Ovary (tissue), 10 donors: ENCODE measurements at regions of chr7 and their contacts with region 1.

Region 1: DNA sequence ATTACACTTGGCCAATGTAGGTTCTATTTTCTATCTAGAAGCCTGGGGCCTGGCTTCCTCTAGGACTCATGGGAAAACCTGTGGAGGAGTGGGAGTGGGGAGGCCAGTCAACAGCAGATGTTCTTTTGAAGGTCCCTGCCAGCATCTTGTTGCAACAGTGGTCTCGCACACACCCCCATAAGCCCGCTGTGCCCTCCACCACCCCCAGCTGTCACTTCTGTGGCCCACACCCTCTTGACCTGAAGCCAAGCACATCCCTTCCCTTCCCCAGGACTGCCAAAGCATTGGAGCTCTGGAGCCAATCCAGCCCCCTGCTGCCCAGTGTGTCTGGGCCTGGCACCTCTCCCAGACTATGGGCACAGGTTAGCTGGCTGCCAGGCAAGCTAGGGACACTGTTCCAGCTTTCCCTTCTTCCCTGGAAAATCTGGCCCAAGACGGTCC is 1.9 kb upstream of the STX1A start:
- DNase-seq: no peak
- H3K4me3 ChIP-seq: no peak overlapping the region
- H3K27ac ChIP-seq: no peak overlapping the region
- H3K4me1 ChIP-seq: no peaks in the 10 kb centered on the region
- H3K27me3 ChIP-seq: no peaks in the 10 kb centered on the region
- CTCF ChIP-seq: no peak
- EP300 ChIP-seq: no peak
- POLR2A ChIP-seq: no peak

Region 2: DNA sequence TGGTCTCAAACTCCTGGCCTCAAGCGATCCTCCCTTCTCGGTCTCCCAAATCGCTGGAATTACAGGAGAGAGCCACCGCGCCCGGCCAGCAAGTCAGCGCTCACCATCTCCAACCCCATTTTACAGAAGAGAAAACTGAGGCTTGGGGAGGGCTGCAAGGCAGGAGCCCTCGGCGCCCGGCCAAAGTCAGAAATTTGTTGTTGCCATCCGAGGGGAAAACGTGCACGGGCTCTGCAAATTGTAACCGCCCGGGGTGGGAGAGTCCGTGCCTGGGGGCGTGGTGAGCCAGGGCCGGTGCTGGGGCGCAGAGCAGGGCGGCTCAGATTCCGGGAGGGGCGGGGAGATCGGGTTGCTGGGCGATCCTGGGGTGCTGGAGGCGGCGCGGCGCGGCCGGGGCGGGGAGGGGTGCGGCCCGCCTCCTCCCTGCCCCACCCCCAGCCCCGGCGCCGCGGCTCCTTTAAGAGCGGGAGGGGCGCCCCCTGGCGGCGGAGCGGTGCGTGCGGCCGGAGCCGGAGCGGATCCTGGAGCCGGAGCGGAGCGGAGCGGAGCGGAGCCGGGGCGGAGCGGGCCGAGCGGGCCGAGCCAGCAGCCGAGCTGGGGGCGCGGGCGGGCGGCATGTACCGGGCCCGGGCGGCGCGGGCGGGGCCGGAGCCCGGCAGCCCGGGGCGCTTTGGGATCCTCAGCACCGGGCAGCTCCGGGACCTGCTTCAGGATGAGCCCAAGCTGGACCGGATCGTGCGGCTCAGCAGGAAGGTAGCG is 53.9 kb before region 1 on chr7 and contains the start of gene VPS37D:
- intact Hi-C with region 1: loop called in 1 of 4 experiments (anchors 10 kb)
- DNase-seq: peak; percentile 89 to 95 (median 94)
- H3K4me3 ChIP-seq: peak within 1 kb of the TSS; percentile 43
- H3K27ac ChIP-seq: no peak within 1 kb of the TSS
- H3K4me1 ChIP-seq: peaks cover 8% of the 10 kb centered on the region
- H3K27me3 ChIP-seq: no peaks in the 10 kb centered on the region
- CTCF ChIP-seq: peak; percentile 56 to 93 (median 91)
- EP300 ChIP-seq: no peak
- POLR2A ChIP-seq: no peak
- total RNA-seq, gene VPS37D: 4.7 to 8.8 (median 6.3) TPM

Region 3: DNA sequence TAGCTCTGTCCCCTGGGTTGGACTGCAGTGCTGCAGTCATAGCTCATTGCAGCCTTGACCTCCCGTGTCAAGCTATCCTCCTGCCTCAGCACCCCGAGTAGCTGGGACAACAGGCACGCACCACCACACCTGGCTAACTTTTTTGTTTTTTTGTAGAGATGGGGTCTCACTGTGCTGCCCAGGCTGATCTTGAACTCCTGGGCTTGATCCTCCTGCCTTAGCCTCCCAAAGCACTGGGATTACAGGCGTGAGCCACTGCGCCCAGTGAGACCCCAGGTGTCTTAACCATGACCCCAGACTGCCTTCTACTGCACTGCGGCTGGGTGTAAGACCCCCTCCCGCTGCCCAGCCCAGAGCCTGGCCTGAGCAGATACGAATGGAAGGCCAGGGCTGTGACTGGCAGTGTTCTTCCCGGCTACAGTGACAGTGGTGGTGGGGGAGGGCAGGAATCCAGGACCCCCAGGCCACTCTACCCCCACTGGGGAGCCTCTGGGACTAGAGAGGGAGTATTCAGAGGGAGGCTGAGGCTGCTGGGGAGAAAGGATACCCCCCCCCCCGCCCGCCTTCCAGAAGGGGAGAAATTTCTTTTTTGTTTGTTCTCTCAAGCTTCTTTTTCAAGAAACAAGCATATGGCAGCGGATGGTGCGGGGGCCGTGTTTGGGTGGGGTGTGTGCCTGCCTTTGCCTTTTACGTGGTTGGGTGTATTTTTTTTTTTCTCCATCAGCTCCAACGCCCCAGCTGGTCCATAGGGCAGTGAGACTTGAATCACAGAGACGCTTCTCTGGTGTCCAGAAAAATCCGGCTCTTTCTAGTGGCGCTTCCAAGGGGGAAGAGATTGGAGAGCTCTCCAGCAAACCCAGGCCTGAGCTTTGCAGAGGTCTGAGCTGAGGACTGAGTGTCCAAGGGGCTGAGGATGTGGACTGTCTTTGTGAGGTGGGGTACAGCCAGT is 768.9 kb after region 1 on chr7:
- intact Hi-C with region 1: no loop called
- DNase-seq: peak in 1 of 5 donors; percentile 34
- H3K4me3 ChIP-seq: no peak overlapping the region
- H3K27ac ChIP-seq: no peak overlapping the region
- H3K4me1 ChIP-seq: peaks cover 2% of the 10 kb centered on the region
- H3K27me3 ChIP-seq: no peaks in the 10 kb centered on the region
- CTCF ChIP-seq: no peak
- EP300 ChIP-seq: no peak
- POLR2A ChIP-seq: no peak